Mammary epithelial cell (primary cell): ENCODE measurements at regions of chr2 and their contacts with region 1.

Region 1: GRCh38 chr2:102258386-102259074 is 52.8 kb upstream of the IL1RL1 start:
- DNase-seq: peak; percentile 92
- H3K4me3 ChIP-seq: no peak overlapping the region
- H3K27ac ChIP-seq: peak overlapping the region; percentile 49
- H3K4me1 ChIP-seq: peaks cover 11% of the 10 kb centered on the region
- H3K27me3 ChIP-seq: no peaks in the 10 kb centered on the region
- CTCF ChIP-seq: no peak

Region 2: GRCh38 chr2:102126651-102127050 is 131.9 kb before region 1 on chr2:
- CTCF ChIA-PET with region 1: no interaction called
- dilution Hi-C with region 1: no loop called
- in situ Hi-C with region 1: no loop called
- intact Hi-C with region 1: loop called (anchors 1 kb)
- DNase-seq: no peak
- H3K4me3 ChIP-seq: no peak overlapping the region
- H3K27ac ChIP-seq: peak overlapping the region; percentile 95
- H3K4me1 ChIP-seq: peaks cover 16% of the 10 kb centered on the region
- H3K27me3 ChIP-seq: no peaks in the 10 kb centered on the region
- CTCF ChIP-seq: no peak

Region 3: GRCh38 chr2:102294802-102295489 is 36.4 kb after region 1 on chr2:
- CTCF ChIA-PET with region 1: no interaction called
- dilution Hi-C with region 1: no loop called
- in situ Hi-C with region 1: loop called in 1 of 2 experiments (anchors 5 kb)
- intact Hi-C with region 1: loop called (anchors 2 kb)
- DNase-seq: peak; percentile 76
- H3K4me3 ChIP-seq: no peak overlapping the region
- H3K27ac ChIP-seq: no peak overlapping the region
- H3K4me1 ChIP-seq: peaks cover 4% of the 10 kb centered on the region
- H3K27me3 ChIP-seq: peaks cover 7% of the 10 kb centered on the region
- CTCF ChIP-seq: no peak

Region 4: DNA sequence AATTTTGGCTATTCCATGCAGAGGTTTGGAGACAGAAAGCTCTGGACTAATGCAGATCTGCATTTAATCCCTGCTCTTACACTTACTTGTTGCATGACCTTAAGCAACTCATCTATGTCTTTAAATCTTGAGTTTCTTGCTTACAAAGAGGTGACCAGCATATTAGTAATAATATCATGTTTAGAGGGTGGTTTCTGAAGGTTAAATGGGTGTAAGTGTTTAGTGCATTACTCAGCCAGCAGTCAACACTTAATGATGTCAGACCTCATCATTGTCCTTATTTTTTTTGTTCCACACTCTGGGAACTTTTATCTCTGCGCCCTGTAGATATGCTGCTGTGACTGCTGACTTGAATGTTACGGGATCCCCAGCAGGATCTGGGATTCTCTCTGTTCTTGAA is 54.5 kb after region 1 on chr2:
- CTCF ChIA-PET with region 1: no interaction called
- dilution Hi-C with region 1: no loop called
- in situ Hi-C with region 1: no loop called
- intact Hi-C with region 1: loop called (anchors 1 kb)
- DNase-seq: peak; percentile 86
- H3K4me3 ChIP-seq: no peak overlapping the region
- H3K27ac ChIP-seq: no peak overlapping the region
- H3K4me1 ChIP-seq: peaks cover 29% of the 10 kb centered on the region
- H3K27me3 ChIP-seq: no peaks in the 10 kb centered on the region
- CTCF ChIP-seq: no peak

Region 5: DNA sequence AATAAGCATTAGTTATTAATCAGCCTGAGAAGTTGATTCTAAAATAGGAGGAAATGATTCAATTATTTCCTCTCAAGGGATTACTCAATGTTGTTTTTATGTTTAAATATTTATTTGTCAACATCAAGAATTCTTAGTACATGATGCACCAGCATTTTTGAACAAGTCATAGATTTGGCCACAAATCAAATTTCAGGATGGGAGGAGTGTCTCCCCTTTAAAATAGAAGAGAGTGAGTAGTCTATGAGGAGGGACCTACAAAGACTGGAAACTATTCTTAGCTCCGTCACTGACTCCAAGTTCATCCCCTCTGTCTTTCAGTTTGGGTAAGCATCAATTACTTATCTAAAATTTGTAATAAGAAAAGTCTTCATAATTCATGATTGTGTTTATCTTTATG is 78.5 kb after region 1 on chr2:
- CTCF ChIA-PET with region 1: interaction called, 5 read pairs
- dilution Hi-C with region 1: no loop called
- in situ Hi-C with region 1: no loop called
- intact Hi-C with region 1: loop called (anchors 1 kb)
- DNase-seq: no peak
- H3K4me3 ChIP-seq: no peak overlapping the region
- H3K27ac ChIP-seq: peak overlapping the region; percentile 48
- H3K4me1 ChIP-seq: peaks cover 18% of the 10 kb centered on the region
- H3K27me3 ChIP-seq: no peaks in the 10 kb centered on the region
- CTCF ChIP-seq: no peak